ENCODE measurements at regions of chr6 and their contacts with region 1.

Region 1: DNA sequence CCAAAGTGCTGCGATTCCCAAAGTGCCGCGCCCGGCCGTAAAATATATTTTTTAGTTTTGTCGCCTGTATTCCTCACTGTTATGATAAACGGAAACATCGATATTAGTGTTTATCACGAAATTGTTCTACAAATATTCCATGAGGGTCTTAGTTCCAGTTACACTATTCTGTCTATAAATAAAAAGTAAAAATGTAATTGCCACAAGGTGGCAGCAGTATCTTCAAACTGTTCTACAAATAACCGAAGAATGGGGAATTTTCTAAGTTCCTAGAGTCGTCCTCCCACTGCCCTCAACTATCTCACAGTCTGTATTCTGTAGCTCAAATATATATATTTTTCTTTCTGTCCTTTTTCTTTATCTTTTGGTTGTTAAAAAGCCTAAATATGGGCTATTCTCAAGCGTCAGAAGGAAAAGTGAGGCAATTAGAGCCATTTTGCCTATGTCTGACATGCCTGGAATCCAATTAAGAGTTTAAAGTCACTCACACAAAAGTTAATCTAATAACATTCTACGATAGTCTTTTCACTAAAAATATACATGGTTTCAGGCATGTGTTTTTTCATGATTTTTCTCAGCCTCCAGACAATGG is 14.2 kb upstream of the FAM162B start:
- DNase-seq: peak; percentile 10
- ATAC-seq: peak; percentile 84
- H3K4me3 ChIP-seq: no peak overlapping the region
- H3K27ac ChIP-seq: no peak overlapping the region
- H3K4me1 ChIP-seq: no peaks in the 10 kb centered on the region
- H3K27me3 ChIP-seq: peaks cover 10% of the 10 kb centered on the region; the same call in 1 of the 2 replicates
- CTCF ChIP-seq: peak; percentile 77

Region 2: DNA sequence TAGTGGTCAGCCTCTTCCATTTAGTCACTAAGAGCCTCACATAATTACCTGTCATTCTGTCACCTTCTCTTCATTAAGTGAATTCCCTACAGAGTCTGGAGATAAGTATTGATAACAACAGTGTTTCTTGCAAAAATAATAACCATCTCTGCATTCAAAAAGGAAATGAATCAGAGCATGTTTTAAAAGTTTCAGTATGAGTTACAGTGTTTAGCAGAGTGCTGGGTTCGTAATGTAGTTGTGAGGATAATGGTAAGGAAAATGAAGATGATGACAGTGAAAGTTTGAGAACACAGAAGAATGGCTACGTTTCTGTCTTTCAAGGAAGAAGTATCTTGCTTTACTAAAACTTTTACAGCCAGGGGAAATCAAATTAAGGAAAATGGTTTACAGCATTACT is 17.9 kb after region 1 on chr6:
- CTCF ChIA-PET with region 1: no interaction called
- POLR2A ChIA-PET with region 1: no interaction called
- in situ Hi-C with region 1: no loop called
- intact Hi-C with region 1: no loop called
- DNase-seq: no peak
- ATAC-seq: no peak
- H3K4me3 ChIP-seq: no peak overlapping the region
- H3K27ac ChIP-seq: no peak overlapping the region
- H3K4me1 ChIP-seq: no peaks in the 10 kb centered on the region
- H3K27me3 ChIP-seq: peaks cover 45% of the 10 kb centered on the region
- CTCF ChIP-seq: no peak

Region 3: DNA sequence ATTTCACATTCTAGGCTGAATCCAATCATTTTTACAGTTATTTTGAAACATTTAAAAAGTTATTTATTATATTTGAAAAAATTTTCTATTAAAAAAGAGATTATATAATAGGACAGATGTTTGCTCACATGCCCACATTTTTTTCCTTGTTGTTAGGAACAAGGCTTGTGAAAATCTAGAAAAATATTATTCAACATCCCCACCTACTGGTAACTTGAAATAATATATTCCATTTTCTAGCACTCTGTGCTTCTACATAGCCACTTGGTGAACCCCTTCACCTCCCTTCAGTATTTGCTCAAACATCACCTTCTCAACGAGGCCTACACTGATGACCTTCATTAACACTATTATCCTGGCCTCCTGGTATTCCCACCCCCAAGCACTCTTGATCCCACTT is 67.6 kb after region 1 on chr6:
- CTCF ChIA-PET with region 1: no interaction called
- POLR2A ChIA-PET with region 1: no interaction called
- in situ Hi-C with region 1: no loop called
- intact Hi-C with region 1: loop called (anchors 1 kb)
- DNase-seq: peak; percentile 24
- ATAC-seq: peak; percentile 92
- H3K4me3 ChIP-seq: no peak overlapping the region
- H3K27ac ChIP-seq: no peak overlapping the region
- H3K4me1 ChIP-seq: no peaks in the 10 kb centered on the region
- H3K27me3 ChIP-seq: peaks cover 6% of the 10 kb centered on the region; the same call in 1 of the 2 replicates
- CTCF ChIP-seq: peak; percentile 57

Region 4: GRCh38 chr6:117615894-117616390 is 836.3 kb after region 1 on chr6:
- CTCF ChIA-PET with region 1: no interaction called
- POLR2A ChIA-PET with region 1: no interaction called
- in situ Hi-C with region 1: no loop called
- intact Hi-C with region 1: no loop called
- DNase-seq: no peak
- ATAC-seq: no peak
- H3K4me3 ChIP-seq: no peak overlapping the region
- H3K27ac ChIP-seq: no peak overlapping the region
- H3K4me1 ChIP-seq: no peaks in the 10 kb centered on the region
- H3K27me3 ChIP-seq: no peaks in the 10 kb centered on the region; the same call in 1 of the 2 replicates
- CTCF ChIP-seq: no peak

Measured in Panc1 (cell line).